Heart left ventricle (tissue), 16 donors: ENCODE measurements at regions of chr2 and their contacts with region 1.

Region 1: GRCh38 chr2:190880378-190881073 is at the start of gene GLS:
- DNase-seq: peak; percentile 97 to 98 (median 97)
- ATAC-seq: peak; percentile 95 to 97 (median 96)
- H3K4me3 ChIP-seq: peak within 1 kb of the TSS; percentile 78 to 95 (median 91)
- H3K27ac ChIP-seq: peak within 1 kb of the TSS; percentile 92 to 99 (median 96)
- H3K4me1 ChIP-seq: peaks cover 0 to 71% (median 35%) of the 10 kb centered on the region in 12 donors
- H3K27me3 ChIP-seq: no peaks in the 10 kb centered on the region
- CTCF ChIP-seq: no peak
- POLR2A ChIP-seq: peak; percentile 93 to 100
- total RNA-seq, gene GLS: 31.6 to 94.5 (median 56.1) TPM

Region 2: DNA sequence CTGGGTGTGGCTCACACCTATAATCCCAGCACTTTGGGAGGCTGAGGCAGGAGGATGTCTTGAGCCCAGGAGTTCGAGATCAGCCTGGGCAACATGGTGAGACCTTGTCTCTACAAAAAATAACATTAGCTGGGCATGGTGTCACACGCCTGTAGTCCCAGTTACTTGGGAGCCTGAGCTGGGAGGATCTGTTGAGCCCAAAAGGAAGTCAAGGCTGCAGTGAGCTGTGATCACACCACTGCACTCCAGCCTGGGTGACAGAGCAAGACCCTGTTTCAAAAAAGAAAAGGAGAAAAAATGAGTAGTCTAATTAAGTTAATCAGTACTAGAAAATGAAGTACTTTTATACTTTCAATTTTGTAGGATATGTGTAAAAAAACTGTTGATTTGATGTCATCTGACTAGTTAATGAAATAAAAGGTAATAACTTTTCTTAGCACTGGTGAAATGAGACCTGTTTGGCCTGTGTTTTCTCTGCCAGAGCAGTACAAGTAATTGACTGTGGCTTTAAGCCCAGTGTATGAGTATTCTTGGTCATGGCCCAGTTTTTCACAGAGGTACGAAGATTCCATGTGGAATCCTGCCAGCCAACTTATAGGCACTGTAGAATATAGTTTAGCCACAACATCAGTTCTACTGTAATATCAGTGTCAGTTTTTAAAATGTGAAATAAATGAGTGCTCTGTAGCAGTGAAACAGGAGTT is 436.6 kb before region 1 on chr2:
- intact Hi-C with region 1: no loop called
- DNase-seq: no peak
- ATAC-seq: peak in 1 of 4 donors; percentile 39
- H3K4me3 ChIP-seq: no peak overlapping the region
- H3K27ac ChIP-seq: peak overlapping the region in 5 of 12 donors; percentile 4 to 39 (median 7)
- H3K4me1 ChIP-seq: peaks cover 0 to 72% (median 32%) of the 10 kb centered on the region in 12 donors
- H3K27me3 ChIP-seq: no peaks in the 10 kb centered on the region
- CTCF ChIP-seq: no peak
- POLR2A ChIP-seq: no peak

Region 3: GRCh38 chr2:190843874-190844699 is 36.4 kb before region 1 on chr2:
- intact Hi-C with region 1: no loop called
- DNase-seq: no peak
- ATAC-seq: no peak
- H3K4me3 ChIP-seq: no peak overlapping the region
- H3K27ac ChIP-seq: no peak overlapping the region
- H3K4me1 ChIP-seq: peaks cover 0 to 10% (median 6%) of the 10 kb centered on the region in 12 donors
- H3K27me3 ChIP-seq: no peaks in the 10 kb centered on the region
- CTCF ChIP-seq: no peak
- POLR2A ChIP-seq: no peak

Region 4: GRCh38 chr2:190938771-190939335 is 58.3 kb after region 1 on chr2:
- intact Hi-C with region 1: loop called in 1 of 10 experiments (anchors 5 kb)
- DNase-seq: no peak
- ATAC-seq: no peak
- H3K4me3 ChIP-seq: no peak overlapping the region
- H3K27ac ChIP-seq: peak overlapping the region in 4 of 12 donors; percentile 0 to 27 (median 5)
- H3K4me1 ChIP-seq: peaks cover 0 to 42% (median 20%) of the 10 kb centered on the region in 12 donors
- H3K27me3 ChIP-seq: no peaks in the 10 kb centered on the region
- CTCF ChIP-seq: no peak
- POLR2A ChIP-seq: no peak

Region 5: GRCh38 chr2:191013932-191014652 is 133.6 kb after region 1 on chr2 and contains the start of gene STAT1:
- intact Hi-C with region 1: loop called in 2 of 10 experiments (anchors 2 kb)
- DNase-seq: peak; percentile 94 to 97 (median 95)
- ATAC-seq: peak; percentile 89 to 98 (median 96)
- H3K4me3 ChIP-seq: peak within 1 kb of the TSS; percentile 72 to 94 (median 82)
- H3K27ac ChIP-seq: peak within 1 kb of the TSS; percentile 75 to 98 (median 90)
- H3K4me1 ChIP-seq: peaks cover 0 to 69% (median 30%) of the 10 kb centered on the region in 12 donors
- H3K27me3 ChIP-seq: no peaks in the 10 kb centered on the region
- CTCF ChIP-seq: peak in 6 of 12 donors; percentile 6 to 37 (median 20)
- POLR2A ChIP-seq: peak in 1 of 2 donors; percentile 95
- total RNA-seq, gene STAT1: 29.1 to 469 (median 55.1) TPM